ENCODE measurements at regions of chr4 and their contacts with region 1.

Region 1: GRCh38 chr4:94304365-94304971 is 38.2 kb downstream of the HPGDS start:
- DNase-seq: no peak
- H3K4me3 ChIP-seq: no peak overlapping the region
- H3K27ac ChIP-seq: no peak overlapping the region
- H3K4me1 ChIP-seq: peaks cover 0 to 15% (median 8%) of the 10 kb centered on the region in 6 donors
- H3K27me3 ChIP-seq: no peaks in the 10 kb centered on the region
- CTCF ChIP-seq: peak in 8 of 11 experiments; percentile 14 to 60 (median 44)
- POLR2A ChIP-seq: no peak

Region 2: DNA sequence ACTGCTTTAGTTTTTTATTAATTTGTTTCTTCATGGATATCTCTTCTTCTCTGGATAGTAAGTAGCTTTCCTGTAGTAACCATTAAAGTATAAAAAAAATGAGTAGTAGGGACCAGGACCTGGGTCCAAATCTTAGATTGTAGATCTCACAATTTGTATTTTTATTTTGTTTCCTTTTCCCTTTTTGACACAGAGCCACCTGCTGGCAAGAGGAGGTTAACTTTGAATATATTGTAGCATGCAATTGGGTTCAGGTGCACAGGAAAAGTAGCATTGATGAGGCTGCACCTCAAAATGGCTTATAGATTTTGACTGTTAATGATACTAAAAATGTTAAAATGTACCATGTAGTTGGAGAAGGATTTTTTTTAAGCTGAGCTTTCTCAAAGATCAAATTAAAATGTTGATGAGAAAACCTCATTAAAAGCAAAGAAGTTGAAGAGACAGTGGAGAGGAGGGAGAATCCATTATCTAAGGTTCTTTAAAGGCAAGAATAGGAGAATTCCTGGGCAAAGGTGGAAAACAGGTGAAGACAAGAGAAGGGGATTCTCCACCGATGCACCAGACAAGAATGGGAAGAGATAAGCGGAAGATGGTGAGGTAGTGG is 86.4 kb after region 1 on chr4:
- intact Hi-C with region 1: loop called (anchors 10 kb)
- DNase-seq: no peak
- H3K4me3 ChIP-seq: no peak overlapping the region
- H3K27ac ChIP-seq: no peak overlapping the region
- H3K4me1 ChIP-seq: no peaks in the 10 kb centered on the region
- H3K27me3 ChIP-seq: no peaks in the 10 kb centered on the region
- CTCF ChIP-seq: peak in 8 of 11 experiments; percentile 19 to 46 (median 39)
- POLR2A ChIP-seq: no peak

Region 3: GRCh38 chr4:94595879-94596483 is 291.5 kb after region 1 on chr4:
- intact Hi-C with region 1: loop called (anchors 10 kb)
- DNase-seq: no peak
- H3K4me3 ChIP-seq: no peak overlapping the region
- H3K27ac ChIP-seq: no peak overlapping the region
- H3K4me1 ChIP-seq: peaks cover 0 to 9% (median 3%) of the 10 kb centered on the region in 6 donors
- H3K27me3 ChIP-seq: no peaks in the 10 kb centered on the region
- CTCF ChIP-seq: peak in 10 of 11 experiments; percentile 34 to 75 (median 62)
- POLR2A ChIP-seq: no peak

Measured in spleen (tissue), 13 donors.